Endothelial cell of umbilical vein (primary cell): ENCODE measurements at regions of chr7 and their contacts with region 1.

Region 1: DNA sequence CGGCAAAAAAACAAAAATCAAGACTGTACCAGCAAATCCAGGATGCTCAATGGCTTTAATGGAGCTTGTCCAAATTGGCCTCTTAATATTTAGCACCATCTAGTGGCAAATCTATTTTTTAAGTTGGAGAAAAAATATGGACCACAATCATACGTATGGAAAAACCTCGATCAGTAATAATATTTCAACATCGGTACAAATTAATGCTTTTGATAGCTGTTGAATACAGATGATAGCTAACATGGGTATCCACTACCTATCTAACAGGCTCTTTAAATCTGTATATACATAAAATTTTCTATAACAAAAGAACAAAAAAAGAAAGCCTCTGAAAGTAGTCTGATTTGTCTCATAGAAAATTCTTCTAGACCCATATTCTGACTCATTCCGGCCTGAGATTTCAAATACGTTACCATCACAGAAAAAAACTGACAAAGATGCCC is 29.2 kb downstream of the COA1 start:
- DNase-seq: peak; percentile 69
- H3K4me3 ChIP-seq: no peak overlapping the region
- H3K27ac ChIP-seq: no peak overlapping the region
- H3K4me1 ChIP-seq: peaks cover 6% of the 10 kb centered on the region
- H3K27me3 ChIP-seq: no peaks in the 10 kb centered on the region
- CTCF ChIP-seq: peak; percentile 22 to 34
- POLR2A ChIP-seq: no peak

Region 2: DNA sequence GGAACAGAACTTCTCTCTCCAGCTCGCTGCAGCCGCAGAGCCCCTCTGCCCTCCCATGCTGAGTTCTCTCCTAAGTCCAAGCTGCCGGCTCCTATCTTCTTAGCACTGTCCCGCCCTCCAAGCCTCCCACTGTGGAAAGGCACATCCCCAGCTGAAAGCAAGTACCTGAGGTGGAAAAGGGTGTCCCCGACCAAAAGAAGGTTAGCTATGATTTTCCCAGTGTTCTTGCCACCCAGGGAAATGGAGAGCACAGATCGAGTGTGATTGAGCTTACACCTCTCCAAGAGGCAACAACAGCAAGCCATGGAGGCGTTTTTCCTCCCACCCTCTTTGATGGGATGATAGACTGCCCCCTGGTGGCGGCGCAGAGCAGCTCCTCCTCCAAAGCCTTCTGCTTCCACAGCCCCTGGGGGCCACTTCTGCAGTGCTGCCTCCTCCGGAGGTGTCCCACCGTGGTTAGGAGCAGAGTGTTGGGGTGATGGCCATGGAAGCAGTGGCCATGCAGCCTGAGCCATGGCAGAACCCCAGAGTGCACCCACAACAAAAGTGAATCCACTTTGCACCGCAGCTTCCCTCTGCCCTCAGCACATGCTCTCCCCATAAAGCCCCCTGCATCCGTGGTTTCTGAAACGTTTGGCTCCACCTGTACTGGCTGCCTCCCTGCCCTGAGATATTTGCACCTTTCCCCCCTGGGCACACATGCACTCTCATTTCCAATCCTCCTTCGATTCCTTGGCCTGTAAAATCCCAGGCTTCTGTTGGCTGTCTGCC is 260.3 kb before region 1 on chr7:
- CTCF ChIA-PET with region 1: interaction called, 15 read pairs
- POLR2A ChIA-PET with region 1: no interaction called
- dilution Hi-C with region 1: no loop called
- intact Hi-C with region 1: no loop called
- DNase-seq: peak; percentile 37
- H3K4me3 ChIP-seq: no peak overlapping the region
- H3K27ac ChIP-seq: no peak overlapping the region
- H3K4me1 ChIP-seq: no peaks in the 10 kb centered on the region
- H3K27me3 ChIP-seq: peaks cover 0 to 2% of the 10 kb centered on the region in 2 experiments
- CTCF ChIP-seq: peak; percentile 77 to 95
- POLR2A ChIP-seq: no peak

Region 3: DNA sequence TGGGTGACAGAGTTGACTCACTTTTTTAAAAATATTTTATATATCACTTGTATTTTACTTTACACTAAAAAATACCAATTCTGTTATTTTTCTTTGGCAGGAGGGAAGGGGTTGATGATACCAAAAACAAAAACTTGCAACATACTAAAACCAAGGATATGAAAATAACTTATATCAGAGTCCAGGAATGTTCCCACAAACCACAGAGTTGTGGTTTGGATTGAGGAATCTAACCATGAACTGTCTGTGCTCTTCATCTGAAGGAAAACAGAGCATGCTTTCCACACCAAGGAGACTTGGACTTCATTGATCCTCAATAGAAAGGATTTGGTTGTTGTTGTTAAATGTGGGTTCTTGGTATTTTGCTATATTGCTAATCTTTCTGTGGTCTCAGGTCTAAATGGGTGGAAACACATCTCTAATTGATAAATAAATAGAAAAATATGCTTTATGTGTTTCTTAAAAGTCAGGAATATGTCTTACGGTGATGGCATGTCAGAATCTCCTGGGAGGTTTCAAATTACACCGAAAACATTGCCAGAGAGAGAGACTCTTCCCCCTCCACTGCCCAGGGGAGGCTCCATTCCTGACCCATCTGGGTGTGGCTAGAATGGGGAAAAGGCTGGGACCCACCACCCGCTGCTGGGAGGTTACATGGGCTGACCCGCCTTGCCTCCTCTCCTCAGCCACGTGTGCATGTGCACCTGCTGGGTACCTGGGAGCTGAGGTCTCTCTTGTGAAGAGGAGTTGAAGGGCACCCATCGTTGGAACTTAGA is 164.1 kb before region 1 on chr7:
- CTCF ChIA-PET with region 1: no interaction called
- POLR2A ChIA-PET with region 1: no interaction called
- dilution Hi-C with region 1: no loop called
- intact Hi-C with region 1: no loop called
- DNase-seq: no peak
- H3K4me3 ChIP-seq: no peak overlapping the region
- H3K27ac ChIP-seq: no peak overlapping the region
- H3K4me1 ChIP-seq: no peaks in the 10 kb centered on the region
- H3K27me3 ChIP-seq: peaks cover 3 to 18% of the 10 kb centered on the region in 2 experiments
- CTCF ChIP-seq: no peak
- POLR2A ChIP-seq: no peak

Region 4: GRCh38 chr7:43572516-43573049 is 127.5 kb before region 1 on chr7:
- CTCF ChIA-PET with region 1: interaction called, 10 read pairs
- POLR2A ChIA-PET with region 1: no interaction called
- dilution Hi-C with region 1: loop called (anchors 25 kb)
- intact Hi-C with region 1: no loop called
- DNase-seq: peak; percentile 80
- H3K4me3 ChIP-seq: no peak overlapping the region
- H3K27ac ChIP-seq: peak overlapping the region; percentile 79
- H3K4me1 ChIP-seq: peaks cover 7% of the 10 kb centered on the region
- H3K27me3 ChIP-seq: no peaks in the 10 kb centered on the region
- CTCF ChIP-seq: no peak
- POLR2A ChIP-seq: peak; percentile 13

Region 5: DNA sequence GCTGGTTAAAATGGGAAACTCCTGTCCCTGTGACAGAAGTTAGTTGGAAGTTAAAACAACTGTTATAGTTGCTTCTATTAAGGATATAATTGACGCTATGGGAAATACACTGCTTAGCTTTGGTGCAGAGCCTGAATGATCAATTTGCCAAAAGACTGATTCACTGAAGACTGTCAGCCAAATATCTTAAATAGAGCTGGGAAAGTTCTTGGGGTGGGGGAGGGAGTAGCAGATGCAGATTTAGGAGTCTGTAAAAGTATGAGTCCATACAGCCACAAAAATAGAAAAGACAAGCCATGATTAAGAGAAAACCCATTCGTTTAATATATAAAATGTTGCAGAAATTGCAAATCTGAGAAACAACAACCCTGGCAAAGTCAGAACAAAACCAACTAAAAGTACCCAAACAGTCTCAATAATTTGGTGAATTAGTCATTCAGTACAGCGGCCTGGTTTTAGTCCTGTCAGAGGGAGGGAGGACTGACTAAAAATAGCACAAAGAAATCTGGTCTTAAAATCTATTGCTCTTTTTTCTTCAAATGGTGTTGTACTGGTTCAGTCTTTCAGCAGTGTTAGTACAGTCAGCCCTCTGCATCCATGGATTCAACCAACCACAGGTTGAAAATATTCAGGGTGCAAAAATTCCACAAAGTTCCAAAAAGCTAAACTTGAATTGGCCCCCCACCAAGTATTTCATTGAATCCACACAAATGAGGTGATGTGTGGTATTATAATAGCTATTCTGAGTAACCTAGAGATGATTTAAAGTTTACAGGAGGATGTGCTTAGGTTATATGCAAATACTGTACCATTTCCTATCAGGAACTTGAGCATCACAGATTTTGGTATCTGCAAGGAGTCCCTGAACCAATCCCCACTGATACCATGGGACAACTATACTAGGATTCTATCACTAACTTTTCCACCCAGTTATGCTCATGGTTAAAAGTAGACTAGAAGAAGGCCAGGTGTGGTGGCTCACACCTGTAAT is 87.2 kb before region 1 on chr7:
- CTCF ChIA-PET with region 1: interaction called, 20 read pairs
- POLR2A ChIA-PET with region 1: no interaction called
- dilution Hi-C with region 1: no loop called
- intact Hi-C with region 1: no loop called
- DNase-seq: no peak
- H3K4me3 ChIP-seq: no peak overlapping the region
- H3K27ac ChIP-seq: no peak overlapping the region
- H3K4me1 ChIP-seq: peaks cover 12% of the 10 kb centered on the region
- H3K27me3 ChIP-seq: no peaks in the 10 kb centered on the region
- CTCF ChIP-seq: no peak
- POLR2A ChIP-seq: no peak

Region 6: DNA sequence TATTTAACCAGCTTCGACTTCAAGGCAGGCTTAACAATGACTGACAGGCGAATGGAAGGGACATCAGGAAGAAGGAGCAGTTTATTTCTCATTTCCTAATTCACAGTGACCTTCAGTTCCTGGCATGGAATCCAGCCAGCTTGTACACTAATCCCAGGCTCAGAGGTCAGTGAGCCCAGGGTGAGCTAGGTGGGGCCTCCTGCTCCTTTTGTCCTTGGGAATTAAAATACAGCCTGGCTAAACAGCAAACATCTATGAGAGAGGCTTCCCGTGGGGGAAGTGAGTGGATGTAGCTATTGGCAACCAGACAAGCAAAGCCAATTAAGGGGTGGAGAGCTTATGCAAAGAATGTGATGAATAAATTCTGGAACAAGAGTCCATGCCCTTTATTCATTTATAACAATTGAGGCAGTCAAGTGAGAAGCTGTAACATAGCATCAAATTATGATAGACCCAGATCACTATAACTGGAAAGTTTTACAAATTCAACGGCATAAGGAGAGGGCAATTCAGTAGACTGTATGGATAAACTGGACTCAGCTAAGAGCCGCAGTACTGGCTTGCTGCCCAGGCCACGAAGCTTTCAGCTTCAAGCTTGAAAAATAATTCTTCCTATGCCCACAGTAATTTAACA is 60.1 kb before region 1 on chr7:
- CTCF ChIA-PET with region 1: interaction called, 130 read pairs
- POLR2A ChIA-PET with region 1: interaction called, 4 read pairs
- dilution Hi-C with region 1: no loop called
- intact Hi-C with region 1: loop called (anchors 1 kb)
- DNase-seq: peak; percentile 98
- H3K4me3 ChIP-seq: no peak overlapping the region
- H3K27ac ChIP-seq: peak overlapping the region; percentile 97
- H3K4me1 ChIP-seq: peaks cover 47% of the 10 kb centered on the region
- H3K27me3 ChIP-seq: no peaks in the 10 kb centered on the region
- CTCF ChIP-seq: no peak
- POLR2A ChIP-seq: no peak

Region 7: GRCh38 chr7:43674584-43675436 is 25.3 kb before region 1 on chr7:
- CTCF ChIA-PET with region 1: interaction called, 13 read pairs
- POLR2A ChIA-PET with region 1: no interaction called
- dilution Hi-C with region 1: no loop called
- intact Hi-C with region 1: no loop called
- DNase-seq: peak; percentile 83
- H3K4me3 ChIP-seq: no peak overlapping the region
- H3K27ac ChIP-seq: peak overlapping the region; percentile 64
- H3K4me1 ChIP-seq: peaks cover 20% of the 10 kb centered on the region
- H3K27me3 ChIP-seq: no peaks in the 10 kb centered on the region
- CTCF ChIP-seq: no peak
- POLR2A ChIP-seq: no peak

Region 8: GRCh38 chr7:43834463-43835251 is 134.6 kb after region 1 on chr7:
- CTCF ChIA-PET with region 1: interaction called, 6 read pairs
- POLR2A ChIA-PET with region 1: no interaction called
- dilution Hi-C with region 1: no loop called
- intact Hi-C with region 1: loop called (anchors 1 kb)
- DNase-seq: peak; percentile 22
- H3K4me3 ChIP-seq: no peak overlapping the region
- H3K27ac ChIP-seq: no peak overlapping the region
- H3K4me1 ChIP-seq: no peaks in the 10 kb centered on the region
- H3K27me3 ChIP-seq: peaks cover 0 to 3% of the 10 kb centered on the region in 2 experiments
- CTCF ChIP-seq: no peak
- POLR2A ChIP-seq: no peak

Region 9: DNA sequence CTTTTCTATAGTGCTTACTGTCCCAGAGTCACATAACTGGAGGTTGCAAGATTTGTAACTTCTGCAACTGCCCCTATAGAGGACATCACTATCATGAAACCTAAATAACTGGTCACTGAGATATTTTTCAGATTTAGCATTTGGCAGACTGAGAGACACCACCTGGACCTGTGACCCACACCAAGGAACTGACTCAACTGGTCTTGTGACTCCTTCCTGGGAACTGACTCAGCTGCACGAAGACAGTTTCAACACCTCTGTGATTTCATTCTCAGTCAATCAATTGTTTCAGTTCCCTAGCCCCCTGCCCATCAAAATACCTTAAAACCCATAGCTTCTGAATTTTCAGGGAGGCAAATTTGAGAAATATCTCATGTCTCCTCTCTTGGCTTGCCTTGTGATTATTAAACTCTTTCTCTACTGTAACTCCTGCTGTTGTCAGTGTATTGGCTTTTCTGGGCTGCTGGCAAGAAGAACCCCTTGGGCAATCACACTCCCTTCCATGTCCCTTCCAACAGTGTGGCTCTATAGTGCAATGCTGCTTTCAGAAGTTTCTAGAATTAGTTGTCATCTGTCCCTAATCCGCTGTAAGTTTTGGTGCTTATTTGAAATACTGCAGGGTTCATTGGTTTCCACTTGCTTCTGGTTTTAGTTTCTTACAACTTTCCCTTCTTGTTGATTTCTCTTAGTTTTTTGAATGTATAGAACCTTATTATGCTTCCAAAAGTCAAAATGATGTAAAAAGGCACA is 1746.3 kb after region 1 on chr7:
- CTCF ChIA-PET with region 1: no interaction called
- POLR2A ChIA-PET with region 1: no interaction called
- dilution Hi-C with region 1: no loop called
- intact Hi-C with region 1: no loop called
- DNase-seq: no peak
- H3K4me3 ChIP-seq: no peak overlapping the region
- H3K27ac ChIP-seq: no peak overlapping the region
- H3K4me1 ChIP-seq: no peaks in the 10 kb centered on the region
- H3K27me3 ChIP-seq: peaks cover 0 to 2% of the 10 kb centered on the region in 2 experiments
- CTCF ChIP-seq: no peak
- POLR2A ChIP-seq: no peak